ENCODE measurements at regions of chr20 and their contacts with region 1.

Region 1: DNA sequence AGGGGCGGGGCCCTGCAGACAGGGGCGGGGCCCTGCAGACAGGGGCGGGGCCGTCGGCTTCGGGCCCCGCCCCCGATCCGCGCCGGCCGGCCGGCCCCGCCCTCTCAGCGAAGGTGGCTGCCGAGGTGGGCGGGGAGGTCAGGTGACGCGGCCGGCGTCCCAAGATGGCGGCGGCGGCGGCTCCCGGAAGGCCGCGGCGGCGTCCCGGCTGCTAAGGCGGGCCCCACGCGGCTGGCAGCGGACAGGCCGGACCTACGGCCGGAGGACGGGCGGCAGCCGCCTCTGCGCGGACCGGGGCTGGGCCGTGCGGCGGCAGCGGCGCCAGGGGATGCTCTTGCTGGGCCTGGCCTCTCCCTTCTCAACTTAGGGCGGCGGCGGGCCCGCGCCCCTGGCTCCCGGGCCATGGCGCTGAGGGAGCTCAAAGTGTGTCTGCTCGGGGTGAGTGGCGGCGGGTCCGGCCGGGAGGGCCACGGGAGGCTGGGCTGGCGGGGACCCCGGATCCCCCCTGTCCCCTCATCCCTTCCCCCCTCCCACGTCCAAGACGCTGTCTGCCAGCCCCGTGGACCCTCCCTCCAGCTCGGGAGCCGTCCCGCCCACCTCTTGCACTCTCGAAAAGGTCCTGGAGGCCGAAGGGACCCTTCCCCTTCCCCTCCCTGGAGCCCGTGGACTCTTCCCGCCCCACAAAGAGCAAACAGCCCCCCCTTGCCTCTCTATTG is at the start of gene RAB22A:
- DNase-seq: peak; percentile 85
- ATAC-seq: peak; percentile 61
- H3K4me3 Mint-ChIP-seq: peak within 1 kb of the TSS; percentile 94
- H3K27ac Mint-ChIP-seq: peak within 1 kb of the TSS; percentile 94
- H3K4me1 Mint-ChIP-seq: peaks cover 58% of the 10 kb centered on the region
- H3K27me3 Mint-ChIP-seq: no peaks in the 10 kb centered on the region
- CTCF ChIP-seq: no peak
- total RNA-seq, gene RAB22A: 14.4 and 15.7 TPM in 2 replicates

Region 2: DNA sequence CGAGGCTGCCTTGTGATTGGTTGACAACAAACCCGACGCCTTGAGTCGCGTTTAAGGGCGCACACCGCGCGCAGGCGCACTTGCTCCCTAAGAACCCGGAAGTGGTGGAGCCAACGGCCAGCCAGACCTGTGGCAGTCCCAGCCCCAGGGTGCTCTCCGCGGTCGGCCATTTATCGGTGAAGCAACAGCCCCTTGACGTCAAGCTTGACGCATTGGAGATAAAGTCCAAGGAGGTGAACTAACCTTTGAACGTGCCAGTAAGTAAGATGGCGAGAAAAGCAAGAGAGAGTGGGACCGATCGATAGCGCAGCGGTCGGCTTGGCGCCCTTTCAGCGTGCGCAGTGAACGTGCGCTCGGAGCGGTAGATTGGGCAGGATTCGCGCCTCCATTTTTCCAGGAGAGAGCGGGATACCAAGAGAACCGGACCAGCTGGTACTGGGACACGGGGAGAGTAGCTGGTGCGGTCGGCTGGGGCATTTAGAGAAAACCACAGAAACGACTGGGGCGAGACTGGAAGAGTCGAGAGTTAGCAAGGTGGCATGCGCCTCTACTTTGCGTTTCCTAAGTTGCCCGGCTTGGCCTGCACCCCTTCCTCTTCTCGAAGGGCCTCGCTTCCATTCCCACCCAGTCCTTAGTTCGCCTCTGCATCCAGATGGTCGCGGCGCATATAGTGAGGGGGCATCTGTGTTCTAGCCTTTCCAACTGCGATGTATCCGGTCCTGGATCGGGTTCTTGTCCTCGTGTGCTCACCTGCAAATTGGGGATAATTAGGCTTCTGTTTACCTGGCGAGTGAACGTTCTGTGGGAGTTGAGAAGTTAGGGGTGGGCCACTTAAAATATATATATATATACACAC is 1917.2 kb before region 1 on chr20 and contains the start of gene CSTF1:
- CTCF ChIA-PET with region 1: no interaction called
- POLR2A ChIA-PET with region 1: no interaction called
- intact Hi-C with region 1: loop called (anchors 5 kb)
- DNase-seq: peak; percentile 96
- ATAC-seq: peak; percentile 93
- H3K4me3 Mint-ChIP-seq: no peak within 1 kb of the TSS
- H3K27ac Mint-ChIP-seq: no peak within 1 kb of the TSS
- H3K4me1 Mint-ChIP-seq: peaks cover 22% of the 10 kb centered on the region
- H3K27me3 Mint-ChIP-seq: no peaks in the 10 kb centered on the region
- CTCF ChIP-seq: no peak
- total RNA-seq, gene CSTF1: 31.4 and 36.2 TPM in 2 replicates

Region 3: DNA sequence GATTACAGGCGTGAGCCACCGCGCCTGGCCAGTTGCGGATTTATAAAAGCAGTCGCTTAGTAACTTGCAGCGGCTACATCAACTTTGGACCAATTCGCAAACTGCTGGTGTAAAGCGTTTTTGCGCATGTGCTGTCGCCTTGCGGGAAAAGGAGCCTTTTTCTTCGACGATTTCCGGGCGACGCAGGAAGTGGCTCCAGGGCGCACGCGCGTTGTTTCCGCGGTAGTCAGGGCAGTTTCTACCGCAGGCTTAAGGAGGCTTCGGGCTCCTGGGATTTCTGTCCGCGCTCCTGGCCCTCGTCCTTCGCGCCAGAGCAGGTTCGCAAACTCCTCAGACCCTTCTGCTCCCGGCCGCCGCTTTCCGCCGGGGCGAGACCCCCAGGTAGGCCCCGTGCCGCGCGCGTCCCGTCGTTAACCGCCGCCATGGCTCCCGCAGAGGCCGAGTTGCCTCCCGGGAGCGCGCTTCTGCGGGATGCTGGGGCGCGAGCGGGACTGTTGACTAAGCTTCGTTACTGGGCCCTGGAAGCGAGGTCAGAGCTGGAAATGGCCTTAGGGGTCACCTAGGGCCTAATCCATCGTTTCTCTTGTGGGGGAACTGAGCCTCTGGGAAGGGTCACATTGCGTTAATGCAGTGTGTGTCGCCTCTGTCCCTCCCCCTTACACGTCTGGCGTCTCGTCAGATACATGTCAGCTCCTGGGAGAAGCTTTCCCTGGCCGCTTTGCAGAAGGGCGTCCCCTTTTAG is 958.5 kb before region 1 on chr20 and contains the start of gene RAE1:
- CTCF ChIA-PET with region 1: no interaction called
- POLR2A ChIA-PET with region 1: no interaction called
- intact Hi-C with region 1: loop called (anchors 1 kb)
- DNase-seq: peak; percentile 82
- ATAC-seq: peak; percentile 86
- H3K4me3 Mint-ChIP-seq: peak within 1 kb of the TSS; percentile 90
- H3K27ac Mint-ChIP-seq: peak within 1 kb of the TSS; percentile 79
- H3K4me1 Mint-ChIP-seq: peaks cover 17% of the 10 kb centered on the region
- H3K27me3 Mint-ChIP-seq: peaks cover 3% of the 10 kb centered on the region
- CTCF ChIP-seq: no peak
- total RNA-seq, gene RAE1: 35.7 and 36.6 TPM in 2 replicates

Region 4: DNA sequence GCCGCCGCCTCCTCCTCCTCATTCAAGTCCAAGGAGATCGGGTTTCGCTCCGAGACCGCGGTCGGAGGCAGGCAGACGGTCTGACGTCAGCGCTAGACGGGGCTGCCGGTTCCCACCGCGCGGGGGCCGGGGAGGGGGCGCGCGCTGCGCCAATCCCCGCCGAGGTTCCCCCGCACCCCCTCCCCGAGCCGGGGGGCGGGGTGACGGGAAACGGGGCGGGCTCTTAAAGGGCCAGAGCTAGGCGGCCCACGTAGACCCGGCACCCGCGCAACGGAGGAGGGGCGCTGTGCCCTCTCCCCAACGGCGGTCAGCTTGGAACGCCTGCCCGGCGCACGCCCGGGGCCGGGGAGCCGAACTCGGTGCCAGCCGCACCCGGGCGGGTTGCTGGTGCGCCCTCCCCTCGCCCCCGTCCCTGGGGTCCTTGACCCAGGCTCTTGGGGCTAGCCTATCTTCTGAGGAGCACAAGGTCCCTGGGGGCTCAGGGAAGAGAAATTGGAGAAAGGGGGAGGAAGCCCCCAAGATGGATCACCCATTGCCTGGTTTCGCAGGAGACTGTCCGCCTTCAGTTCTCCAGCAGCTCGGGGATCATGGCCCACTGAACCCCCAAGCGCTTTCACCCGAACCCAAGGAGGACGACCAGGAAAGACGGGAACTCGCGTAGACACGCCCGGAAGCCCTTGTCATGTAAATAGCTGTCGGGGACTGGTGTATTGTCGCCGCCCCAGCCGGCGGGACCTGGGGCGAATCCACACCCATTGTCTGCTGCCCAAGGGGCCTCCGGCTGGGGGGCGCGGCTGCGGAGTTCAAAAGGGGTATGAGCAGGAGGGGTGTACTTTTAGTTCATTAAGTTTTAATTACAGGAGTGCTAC is 599.6 kb before region 1 on chr20 and contains the start of gene PMEPA1:
- CTCF ChIA-PET with region 1: no interaction called
- POLR2A ChIA-PET with region 1: no interaction called
- intact Hi-C with region 1: loop called (anchors 5 kb)
- DNase-seq: peak; percentile 95
- ATAC-seq: peak; percentile 86
- H3K4me3 Mint-ChIP-seq: peak within 1 kb of the TSS; percentile 99
- H3K27ac Mint-ChIP-seq: peak within 1 kb of the TSS; percentile 92
- H3K4me1 Mint-ChIP-seq: peaks cover 59% of the 10 kb centered on the region
- H3K27me3 Mint-ChIP-seq: no peaks in the 10 kb centered on the region
- CTCF ChIP-seq: no peak
- total RNA-seq, gene PMEPA1: 33.1 and 34.8 TPM in 2 replicates

Region 5: DNA sequence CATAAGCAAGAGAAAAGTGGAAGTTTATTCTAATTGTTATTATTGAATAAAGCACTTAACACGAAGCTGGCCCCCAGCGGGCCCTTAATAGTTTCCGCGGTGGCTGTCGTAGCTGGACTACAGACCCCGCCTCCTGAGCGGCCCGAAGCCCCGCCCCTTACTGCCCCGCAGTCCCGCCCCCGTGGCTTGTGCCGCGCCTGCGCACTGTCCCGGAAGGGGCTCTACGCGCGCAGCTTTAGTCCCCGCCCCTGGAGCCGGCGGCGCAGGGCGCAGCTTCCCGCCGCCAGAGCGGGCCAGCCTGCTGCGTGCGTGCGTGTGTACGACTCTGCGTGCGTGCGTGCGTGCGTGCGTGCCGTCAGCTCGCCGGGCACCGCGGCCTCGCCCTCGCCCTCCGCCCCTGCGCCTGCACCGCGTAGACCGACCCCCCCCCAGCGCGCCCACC is 79.2 kb after region 1 on chr20 and contains the start of gene VAPB:
- CTCF ChIA-PET with region 1: no interaction called
- POLR2A ChIA-PET with region 1: interaction called, 18 read pairs
- intact Hi-C with region 1: loop called (anchors 1 kb)
- DNase-seq: peak; percentile 99
- ATAC-seq: peak; percentile 97
- H3K4me3 Mint-ChIP-seq: peak within 1 kb of the TSS; percentile 91
- H3K27ac Mint-ChIP-seq: peak within 1 kb of the TSS; percentile 85
- H3K4me1 Mint-ChIP-seq: peaks cover 37% of the 10 kb centered on the region
- H3K27me3 Mint-ChIP-seq: peaks cover 4% of the 10 kb centered on the region
- CTCF ChIP-seq: no peak
- total RNA-seq, gene VAPB: 20.6 and 26.2 TPM in 2 replicates

Region 6: GRCh38 chr20:58634521-58635278 is 325.0 kb after region 1 on chr20:
- CTCF ChIA-PET with region 1: no interaction called
- POLR2A ChIA-PET with region 1: interaction called, 10 read pairs
- intact Hi-C with region 1: no loop called
- DNase-seq: peak; percentile 23
- ATAC-seq: peak; percentile 84
- H3K4me3 Mint-ChIP-seq: peak overlapping the region; percentile 80
- H3K27ac Mint-ChIP-seq: peak overlapping the region; percentile 46
- H3K4me1 Mint-ChIP-seq: peaks cover 14% of the 10 kb centered on the region
- H3K27me3 Mint-ChIP-seq: peaks cover 22% of the 10 kb centered on the region
- CTCF ChIP-seq: no peak

Region 7: DNA sequence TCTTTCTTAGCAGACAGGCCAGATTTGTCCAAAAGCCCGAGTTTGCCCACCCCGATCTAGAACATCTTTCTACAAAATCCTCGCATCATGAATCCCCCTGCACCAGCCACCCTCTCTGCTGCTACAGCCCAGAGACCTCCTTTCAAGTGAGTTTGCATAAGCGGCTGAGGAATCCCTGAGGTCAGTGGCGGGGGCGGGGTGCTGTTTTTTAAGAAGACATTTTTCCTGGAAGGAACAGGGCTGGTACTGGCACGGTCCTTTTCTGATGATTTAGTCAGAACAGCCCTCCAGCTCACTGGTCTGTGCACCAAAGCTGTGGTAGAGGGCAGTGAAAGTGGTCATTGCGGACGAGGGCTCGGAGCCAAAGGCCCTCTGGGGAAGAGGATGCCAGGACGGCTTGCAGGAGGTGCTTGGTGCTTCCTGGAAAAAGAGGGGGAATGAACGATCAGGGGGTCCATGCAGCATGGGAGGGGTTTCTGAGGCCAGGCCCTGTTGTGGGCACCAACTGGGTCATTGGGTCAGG is 490.5 kb after region 1 on chr20:
- CTCF ChIA-PET with region 1: no interaction called
- POLR2A ChIA-PET with region 1: no interaction called
- intact Hi-C with region 1: no loop called
- DNase-seq: no peak
- ATAC-seq: no peak
- H3K4me3 Mint-ChIP-seq: no peak overlapping the region
- H3K27ac Mint-ChIP-seq: no peak overlapping the region
- H3K4me1 Mint-ChIP-seq: no peaks in the 10 kb centered on the region
- H3K27me3 Mint-ChIP-seq: peaks cover 8% of the 10 kb centered on the region
- CTCF ChIP-seq: no peak